Ascending aorta (tissue), 2 donors: ENCODE measurements at regions of chr1 and their contacts with region 1.

Region 1: GRCh38 chr1:12619792-12620487 is 1.9 kb upstream of the DHRS3 start:
- DNase-seq: peak; percentile 58 to 95
- H3K4me3 ChIP-seq: peak overlapping the region; percentile 83 to 85
- H3K27ac ChIP-seq: peak overlapping the region; percentile 95 to 96
- H3K4me1 ChIP-seq: peaks cover 11 to 37% of the 10 kb centered on the region in 2 donors
- H3K27me3 ChIP-seq: no peaks in the 10 kb centered on the region
- CTCF ChIP-seq: peak; percentile 94 to 97 (median 96)

Region 2: DNA sequence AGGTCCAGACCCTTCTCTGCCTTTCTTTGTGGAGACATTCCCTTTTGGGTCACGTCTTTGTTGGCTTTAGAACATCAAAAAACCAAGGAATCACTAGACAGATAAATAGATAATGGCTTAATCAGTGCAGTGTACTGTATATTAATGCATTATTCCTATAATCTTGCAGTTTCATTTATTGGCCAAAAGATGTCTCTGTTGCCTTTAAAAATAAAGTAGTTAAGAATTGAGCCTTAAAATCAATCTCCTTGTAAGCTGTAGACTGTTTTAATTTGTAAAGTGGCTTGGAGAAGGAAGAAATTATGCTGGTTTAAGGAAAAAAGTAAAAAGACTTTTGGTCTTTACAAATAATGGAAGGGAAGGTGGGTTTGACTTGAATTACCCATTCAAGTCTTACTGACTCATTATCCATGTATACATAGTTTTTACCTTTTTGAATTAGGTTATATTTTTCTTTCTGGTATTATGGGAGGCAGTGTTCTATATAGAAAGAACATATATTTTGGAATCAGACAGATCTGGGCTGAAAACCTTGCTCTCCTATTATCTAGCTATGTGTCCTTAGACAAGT is 305.5 kb before region 1 on chr1:
- intact Hi-C with region 1: loop called (anchors 2 kb)
- DNase-seq: no peak
- H3K4me3 ChIP-seq: no peak overlapping the region
- H3K27ac ChIP-seq: peak overlapping the region; percentile 45 to 88
- H3K4me1 ChIP-seq: peaks cover 8 to 31% of the 10 kb centered on the region in 2 donors
- H3K27me3 ChIP-seq: no peaks in the 10 kb centered on the region
- CTCF ChIP-seq: peak; percentile 39 to 52 (median 42)

Region 3: DNA sequence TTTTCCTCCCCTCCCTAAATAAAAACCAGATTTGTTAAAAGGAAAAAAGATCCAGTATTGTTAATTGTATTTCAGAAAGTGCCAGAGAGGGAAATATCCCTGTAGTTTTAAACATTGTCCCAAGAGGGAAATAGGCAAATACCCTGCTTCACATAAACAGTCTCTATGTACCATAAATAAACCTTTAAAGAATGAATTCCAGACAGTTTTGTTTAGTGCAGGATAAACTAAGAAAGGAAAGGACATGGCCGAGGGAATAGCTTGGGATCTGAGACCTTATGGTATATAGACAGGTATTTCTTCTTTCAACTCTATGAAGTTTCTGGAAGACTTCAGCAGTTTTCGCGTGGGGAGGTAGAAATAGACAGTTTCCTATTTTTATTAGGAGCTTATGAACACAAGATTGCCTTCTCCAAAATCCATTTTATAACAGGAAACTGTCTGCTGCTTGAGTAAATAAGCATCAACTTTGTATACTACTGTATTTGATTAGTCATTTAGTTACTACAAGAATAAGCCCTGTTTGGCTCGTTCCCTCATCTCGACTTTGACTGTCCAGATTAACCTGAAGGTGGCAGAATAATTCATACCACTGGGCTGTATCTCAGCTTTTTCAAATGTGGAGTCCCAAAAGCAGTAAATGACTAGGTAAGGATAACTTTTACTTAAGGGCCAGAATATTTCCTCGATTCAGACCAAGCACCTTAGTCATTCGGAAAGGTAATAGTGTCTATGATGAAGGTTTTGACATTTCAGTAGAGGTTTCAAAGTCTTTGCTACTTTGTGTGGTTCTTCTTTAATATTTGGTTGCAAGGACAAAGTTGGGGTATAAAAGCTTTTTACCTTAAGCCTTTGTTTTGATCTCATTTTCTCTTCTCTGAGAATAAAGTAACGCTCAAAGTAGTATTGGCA is 212.6 kb before region 1 on chr1:
- intact Hi-C with region 1: loop called (anchors 1 kb)
- DNase-seq: no peak
- H3K4me3 ChIP-seq: no peak overlapping the region
- H3K27ac ChIP-seq: peak overlapping the region; percentile 75 to 83
- H3K4me1 ChIP-seq: peaks cover 19 to 51% of the 10 kb centered on the region in 2 donors
- H3K27me3 ChIP-seq: no peaks in the 10 kb centered on the region
- CTCF ChIP-seq: peak; percentile 40 to 52 (median 49)

Region 4: GRCh38 chr1:12539705-12540579 is 80.0 kb before region 1 on chr1:
- intact Hi-C with region 1: loop called (anchors 1 kb)
- DNase-seq: peak; percentile 77 to 95
- H3K4me3 ChIP-seq: no peak overlapping the region
- H3K27ac ChIP-seq: peak overlapping the region; percentile 74 to 84
- H3K4me1 ChIP-seq: peaks cover 10 to 19% of the 10 kb centered on the region in 2 donors
- H3K27me3 ChIP-seq: no peaks in the 10 kb centered on the region
- CTCF ChIP-seq: peak in 1 of 3 experiments; percentile 21

Region 5: DNA sequence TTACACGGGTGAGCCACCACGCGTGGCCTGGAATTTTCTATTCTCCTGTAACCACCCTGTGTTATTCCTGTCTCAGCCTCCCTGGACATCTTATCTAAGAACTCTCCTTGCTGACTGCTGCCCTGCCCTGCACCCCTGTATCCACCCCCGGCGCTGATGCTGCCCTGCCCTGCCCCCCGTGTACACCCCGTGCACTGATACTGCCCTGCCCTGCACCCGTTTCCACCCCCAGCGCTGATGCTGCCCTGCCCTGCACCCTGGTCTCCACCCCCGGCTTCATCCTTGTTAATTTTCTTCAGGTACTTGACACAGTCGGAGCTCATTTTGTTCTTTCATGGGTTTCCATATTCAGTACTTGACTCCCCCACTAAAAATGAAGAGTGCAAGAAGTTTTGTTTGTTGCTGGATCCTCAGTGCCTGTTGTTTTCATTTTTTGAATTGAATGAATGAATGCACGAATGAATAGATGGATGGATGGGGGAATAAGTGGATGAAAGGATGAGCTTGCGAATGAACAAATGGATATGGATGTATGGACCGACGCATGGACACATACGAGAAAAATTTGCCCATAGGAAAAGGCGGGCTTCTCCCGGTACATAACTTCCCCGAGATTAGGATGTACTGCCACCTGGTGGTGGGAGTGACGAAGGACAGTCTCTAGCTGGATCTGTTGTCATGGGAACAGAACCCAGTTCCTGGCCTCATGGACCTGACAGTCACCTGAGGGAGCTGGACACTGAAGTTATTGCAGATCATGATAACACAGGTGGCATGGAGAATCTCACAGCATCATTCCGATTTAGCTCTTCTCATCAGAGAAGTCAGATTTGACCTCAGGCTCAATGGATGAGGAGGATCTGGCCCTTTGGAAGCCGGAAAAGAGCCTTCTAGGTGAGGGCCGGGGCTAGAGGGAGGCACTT is 38.9 kb after region 1 on chr1:
- intact Hi-C with region 1: loop called (anchors 2 kb)
- DNase-seq: peak in 1 of 2 donors; percentile 85
- H3K4me3 ChIP-seq: no peak overlapping the region
- H3K27ac ChIP-seq: no peak overlapping the region
- H3K4me1 ChIP-seq: no peaks in the 10 kb centered on the region
- H3K27me3 ChIP-seq: no peaks in the 10 kb centered on the region
- CTCF ChIP-seq: peak; percentile 88 to 95 (median 95)